IMR-90 (cell line): ENCODE measurements at regions of chr17 and their contacts with region 1.

Region 1: DNA sequence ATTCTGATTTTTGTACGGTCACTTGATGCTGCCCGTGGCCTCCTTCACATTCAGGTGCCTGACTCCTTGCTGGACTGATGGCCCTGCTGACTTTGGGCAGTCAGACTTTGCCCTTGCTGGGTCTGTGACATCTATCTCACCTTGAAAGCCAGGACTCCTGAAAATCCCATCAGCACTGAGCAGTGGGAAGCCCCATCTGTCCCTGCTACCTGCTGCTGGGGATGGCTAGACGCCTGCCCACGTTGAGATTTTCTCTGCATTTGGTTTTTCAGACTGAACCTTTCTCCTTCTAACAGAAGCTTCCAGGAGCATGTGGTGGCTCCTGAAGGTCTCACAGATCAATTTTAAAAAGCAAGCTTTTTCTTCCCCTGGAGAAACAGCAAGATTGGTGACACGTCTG is 10.2 kb upstream of the ZNF18 start:
- DNase-seq: no peak
- ATAC-seq: no peak
- H3K4me3 ChIP-seq: no peak overlapping the region
- H3K27ac ChIP-seq: no peak overlapping the region
- H3K4me1 ChIP-seq: no peaks in the 10 kb centered on the region
- H3K27me3 ChIP-seq: peaks cover 2% of the 10 kb centered on the region; the same call in 1 of the 2 replicates
- CTCF ChIP-seq: no peak
- POLR2A ChIP-seq: no peak
- RAD21 ChIP-seq: no peak

Region 2: DNA sequence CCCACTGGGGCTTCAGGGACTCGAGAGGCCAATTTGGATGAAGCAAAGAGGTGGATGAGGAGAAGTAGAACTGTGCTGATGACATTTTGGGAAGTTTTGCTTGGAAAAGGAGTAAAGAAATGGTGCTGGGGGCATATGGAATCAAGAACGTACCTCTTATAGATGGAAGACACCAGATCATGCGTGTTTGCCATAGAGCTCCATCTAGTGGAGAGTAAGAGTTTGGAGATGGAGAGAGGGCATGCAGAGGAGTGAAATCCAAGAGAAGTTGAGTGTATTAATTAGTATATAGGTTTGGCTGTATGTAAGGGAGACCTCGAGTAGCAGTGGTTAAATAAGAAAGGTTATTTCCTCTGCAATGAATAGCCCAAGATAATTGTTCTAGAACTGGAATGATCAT is 710.5 kb before region 1 on chr17:
- CTCF ChIA-PET with region 1: no interaction called
- POLR2A ChIA-PET with region 1: no interaction called
- dilution Hi-C with region 1: no loop called
- in situ Hi-C with region 1: no loop called
- intact Hi-C with region 1: no loop called
- DNase-seq: no peak
- ATAC-seq: no peak
- H3K4me3 ChIP-seq: no peak overlapping the region
- H3K27ac ChIP-seq: no peak overlapping the region
- H3K4me1 ChIP-seq: no peaks in the 10 kb centered on the region
- H3K27me3 ChIP-seq: no peaks in the 10 kb centered on the region
- CTCF ChIP-seq: no peak
- POLR2A ChIP-seq: no peak
- RAD21 ChIP-seq: no peak

Region 3: GRCh38 chr17:11690681-11691080 is 316.8 kb before region 1 on chr17:
- CTCF ChIA-PET with region 1: no interaction called
- POLR2A ChIA-PET with region 1: no interaction called
- dilution Hi-C with region 1: no loop called
- in situ Hi-C with region 1: no loop called
- intact Hi-C with region 1: no loop called
- DNase-seq: no peak
- ATAC-seq: no peak
- H3K4me3 ChIP-seq: no peak overlapping the region
- H3K27ac ChIP-seq: no peak overlapping the region
- H3K4me1 ChIP-seq: no peaks in the 10 kb centered on the region
- H3K27me3 ChIP-seq: no peaks in the 10 kb centered on the region
- CTCF ChIP-seq: no peak
- POLR2A ChIP-seq: no peak
- RAD21 ChIP-seq: no peak

Region 4: GRCh38 chr17:12098568-12098967 is 91.1 kb after region 1 on chr17:
- CTCF ChIA-PET with region 1: no interaction called
- POLR2A ChIA-PET with region 1: interaction called, 20 read pairs
- dilution Hi-C with region 1: no loop called
- in situ Hi-C with region 1: no loop called
- intact Hi-C with region 1: no loop called
- DNase-seq: no peak
- ATAC-seq: no peak
- H3K4me3 ChIP-seq: no peak overlapping the region
- H3K27ac ChIP-seq: no peak overlapping the region
- H3K4me1 ChIP-seq: no peaks in the 10 kb centered on the region
- H3K27me3 ChIP-seq: no peaks in the 10 kb centered on the region
- CTCF ChIP-seq: no peak
- POLR2A ChIP-seq: no peak
- RAD21 ChIP-seq: no peak